ENCODE measurements at regions of chr3 and their contacts with region 1.

Region 1: DNA sequence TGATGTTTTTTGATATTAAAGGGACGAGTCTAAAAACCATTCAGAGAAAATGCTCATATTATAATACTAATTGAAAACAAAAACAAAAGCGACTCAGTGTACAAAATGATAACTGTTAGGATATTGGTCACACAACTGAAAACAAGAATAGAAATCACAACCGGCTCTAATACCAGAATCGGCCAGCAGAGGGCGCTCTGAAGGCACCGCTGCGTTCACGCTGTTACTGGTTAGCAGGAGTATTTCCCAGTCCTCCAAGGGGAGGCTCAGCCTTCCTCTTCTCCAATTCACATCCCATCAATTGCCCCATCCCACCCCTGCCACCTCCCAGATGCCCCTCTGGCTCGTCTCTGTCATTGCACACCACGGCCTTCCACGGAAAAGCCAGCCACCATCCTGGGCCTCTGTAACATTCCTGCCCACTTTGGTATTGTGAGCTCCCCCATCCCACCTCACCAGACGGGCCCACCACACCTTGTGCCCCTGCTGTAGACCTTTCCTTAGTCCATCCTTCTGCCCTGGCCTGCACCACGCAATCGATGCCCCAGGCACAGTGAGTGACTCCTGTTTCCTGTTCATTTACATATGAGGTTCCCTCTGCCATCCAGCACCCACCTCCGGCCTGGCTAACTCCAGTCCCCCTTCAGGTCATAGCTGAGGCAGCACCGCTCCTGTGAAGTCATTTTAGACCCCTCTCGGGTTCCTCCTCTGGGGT is 8.5 kb downstream of the FAM107A start:
- DNase-seq: peak; percentile 86
- H3K4me3 Mint-ChIP-seq: no peak overlapping the region
- H3K27ac Mint-ChIP-seq: no peak overlapping the region
- H3K4me1 Mint-ChIP-seq: peaks cover 4% of the 10 kb centered on the region
- H3K27me3 Mint-ChIP-seq: no peaks in the 10 kb centered on the region

Region 2: GRCh38 chr3:58585005-58585786 is 16.5 kb after region 1 on chr3:
- CTCF ChIA-PET with region 1: interaction called, 29 read pairs
- POLR2A ChIA-PET with region 1: no interaction called
- intact Hi-C with region 1: loop called (anchors 2 kb)
- DNase-seq: peak; percentile 78
- H3K4me3 Mint-ChIP-seq: peak overlapping the region; percentile 78
- H3K27ac Mint-ChIP-seq: no peak overlapping the region
- H3K4me1 Mint-ChIP-seq: peaks cover 12% of the 10 kb centered on the region
- H3K27me3 Mint-ChIP-seq: peaks cover 29% of the 10 kb centered on the region

Region 3: DNA sequence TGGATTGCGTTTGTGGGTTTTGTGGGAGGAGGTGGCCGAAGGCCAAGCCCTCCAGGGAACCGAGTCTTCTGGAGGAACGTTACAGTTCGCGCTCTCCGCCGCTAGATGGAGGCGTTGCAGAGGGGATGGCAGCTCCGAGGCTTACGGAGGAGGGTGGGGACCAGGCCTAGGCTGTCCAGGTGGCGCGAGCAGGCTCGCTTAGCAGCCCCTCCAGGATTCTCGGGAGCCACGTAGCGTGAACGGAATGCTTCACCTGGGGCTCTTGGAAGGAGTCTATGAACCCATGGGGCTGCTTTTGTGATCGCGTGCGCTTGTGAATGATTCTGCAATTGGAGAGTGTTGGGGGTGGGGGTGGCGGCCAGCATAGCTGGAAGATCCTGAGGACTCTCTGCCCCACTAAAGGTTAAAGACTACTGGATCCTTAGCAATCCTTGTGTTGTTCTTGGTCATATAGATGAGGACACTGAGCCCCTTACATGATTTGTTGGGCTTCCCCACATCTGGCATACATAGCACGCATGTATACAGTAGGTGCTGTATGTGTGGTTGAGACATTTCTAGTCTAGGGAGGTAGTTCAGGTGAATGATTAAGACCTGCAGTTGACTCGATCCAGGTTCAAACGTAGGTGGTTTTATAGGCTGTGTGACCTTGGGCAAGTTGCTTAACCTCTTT is 72.1 kb after region 1 on chr3:
- CTCF ChIA-PET with region 1: interaction called, 223 read pairs
- POLR2A ChIA-PET with region 1: no interaction called
- intact Hi-C with region 1: no loop called
- DNase-seq: peak; percentile 71
- H3K4me3 Mint-ChIP-seq: no peak overlapping the region
- H3K27ac Mint-ChIP-seq: no peak overlapping the region
- H3K4me1 Mint-ChIP-seq: no peaks in the 10 kb centered on the region
- H3K27me3 Mint-ChIP-seq: no peaks in the 10 kb centered on the region